A549 (cell line): ENCODE measurements at regions of chr9 and their contacts with region 1.

Region 1: DNA sequence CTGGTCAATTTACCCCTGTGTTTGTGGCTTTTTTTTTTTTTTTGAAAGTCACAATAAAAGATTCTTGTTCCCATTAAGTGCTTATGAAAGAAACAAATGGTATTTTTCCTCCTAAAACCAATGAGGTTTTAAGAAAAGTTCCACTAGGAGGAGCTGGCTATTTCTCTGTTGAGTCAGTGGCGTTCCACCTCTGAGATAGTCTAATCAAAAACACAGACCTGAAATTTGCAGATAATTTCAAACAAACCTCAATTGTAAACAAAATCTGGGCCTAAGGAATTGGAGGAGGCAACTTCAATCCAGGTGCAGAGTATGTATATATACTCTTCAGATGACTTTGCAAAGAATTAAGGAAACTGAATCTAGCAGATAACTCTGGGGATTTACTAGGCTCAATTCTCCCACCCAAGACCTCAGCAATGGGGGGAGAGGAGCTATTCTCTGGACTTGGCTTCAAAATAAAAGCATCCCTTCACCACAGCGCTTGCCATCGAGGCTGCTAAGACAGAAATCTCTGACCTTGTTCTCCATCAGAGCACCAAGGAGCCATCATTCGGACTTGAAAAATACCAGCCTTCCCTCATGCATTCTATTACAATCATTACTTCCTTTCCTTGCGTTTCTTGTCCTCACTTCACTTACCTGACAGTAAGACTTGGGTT is 52.4 kb downstream of the FANCC start:
- DNase-seq: peak in 1 of 2 experiments; percentile 31
- ATAC-seq: peak in 1 of 2 experiments; percentile 54; a peak in 2 of 6 replicates
- H3K4me3 ChIP-seq: no peak overlapping the region
- H3K27ac ChIP-seq: no peak overlapping the region
- H3K4me1 ChIP-seq: peaks cover 44% of the 10 kb centered on the region
- CTCF ChIP-seq: peak; percentile 58
- EP300 ChIP-seq: no peak
- POLR2A ChIP-seq: no peak
- RAD21 ChIP-seq: peak; percentile 65 to 68

Region 2: GRCh38 chr9:95249986-95250385 is 15.1 kb before region 1 on chr9:
- CTCF ChIA-PET with region 1: interaction called, 18 read pairs
- POLR2A ChIA-PET with region 1: no interaction called
- DNase-seq: no peak
- ATAC-seq: no peak
- H3K4me3 ChIP-seq: no peak overlapping the region
- H3K27ac ChIP-seq: no peak overlapping the region
- H3K4me1 ChIP-seq: no peaks in the 10 kb centered on the region
- CTCF ChIP-seq: no peak
- EP300 ChIP-seq: no peak
- POLR2A ChIP-seq: no peak
- RAD21 ChIP-seq: no peak

Region 3: DNA sequence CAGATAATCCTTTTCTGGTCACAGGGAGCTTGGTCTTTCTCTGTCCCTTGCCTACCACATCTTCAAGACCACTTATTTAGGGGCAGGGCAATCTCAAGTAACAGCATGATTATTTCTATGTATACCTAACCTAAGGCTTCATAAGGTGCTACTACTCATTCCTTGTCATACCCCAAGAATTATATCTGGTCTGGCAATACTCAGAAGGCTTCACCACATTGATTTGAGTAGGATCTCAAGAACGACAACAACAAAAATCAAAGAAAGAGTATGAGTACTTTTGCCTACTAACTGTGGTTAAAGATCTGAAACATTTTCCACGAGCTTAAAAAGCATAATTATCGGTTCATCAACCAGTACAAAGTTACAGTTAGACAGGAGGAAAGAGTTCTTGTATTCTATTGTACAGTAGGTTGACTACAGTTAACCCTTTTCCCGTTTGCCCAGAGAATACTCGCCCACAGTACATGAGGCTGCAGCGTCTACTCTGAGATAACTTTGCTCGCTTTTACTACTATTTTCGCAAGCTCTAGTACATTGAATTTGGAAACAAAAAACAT is 11.4 kb after region 1 on chr9:
- CTCF ChIA-PET with region 1: interaction called, 10 read pairs
- POLR2A ChIA-PET with region 1: no interaction called
- DNase-seq: no peak
- ATAC-seq: no peak
- H3K4me3 ChIP-seq: no peak overlapping the region
- H3K27ac ChIP-seq: no peak overlapping the region
- H3K4me1 ChIP-seq: no peaks in the 10 kb centered on the region
- CTCF ChIP-seq: no peak
- EP300 ChIP-seq: no peak
- POLR2A ChIP-seq: no peak
- RAD21 ChIP-seq: no peak

Region 4: GRCh38 chr9:95649801-95650213 is 384.7 kb after region 1 on chr9:
- CTCF ChIA-PET with region 1: no interaction called
- POLR2A ChIA-PET with region 1: no interaction called
- DNase-seq: no peak
- ATAC-seq: no peak
- H3K4me3 ChIP-seq: no peak overlapping the region
- H3K27ac ChIP-seq: no peak overlapping the region
- H3K4me1 ChIP-seq: no peaks in the 10 kb centered on the region
- CTCF ChIP-seq: no peak
- EP300 ChIP-seq: no peak
- POLR2A ChIP-seq: no peak
- RAD21 ChIP-seq: no peak